ENCODE measurements at regions of chr2 and their contacts with region 1.

Region 1: GRCh38 chr2:102082571-102083392 is 59.8 kb upstream of the IL1R1 start:
- DNase-seq: peak; percentile 74
- ATAC-seq: peak; percentile 93
- H3K4me3 Mint-ChIP-seq: peak overlapping the region; percentile 56
- H3K27ac Mint-ChIP-seq: peak overlapping the region; percentile 92
- H3K4me1 Mint-ChIP-seq: peaks cover 53% of the 10 kb centered on the region
- H3K27me3 Mint-ChIP-seq: no peaks in the 10 kb centered on the region
- CTCF ChIP-seq: no peak

Region 2: DNA sequence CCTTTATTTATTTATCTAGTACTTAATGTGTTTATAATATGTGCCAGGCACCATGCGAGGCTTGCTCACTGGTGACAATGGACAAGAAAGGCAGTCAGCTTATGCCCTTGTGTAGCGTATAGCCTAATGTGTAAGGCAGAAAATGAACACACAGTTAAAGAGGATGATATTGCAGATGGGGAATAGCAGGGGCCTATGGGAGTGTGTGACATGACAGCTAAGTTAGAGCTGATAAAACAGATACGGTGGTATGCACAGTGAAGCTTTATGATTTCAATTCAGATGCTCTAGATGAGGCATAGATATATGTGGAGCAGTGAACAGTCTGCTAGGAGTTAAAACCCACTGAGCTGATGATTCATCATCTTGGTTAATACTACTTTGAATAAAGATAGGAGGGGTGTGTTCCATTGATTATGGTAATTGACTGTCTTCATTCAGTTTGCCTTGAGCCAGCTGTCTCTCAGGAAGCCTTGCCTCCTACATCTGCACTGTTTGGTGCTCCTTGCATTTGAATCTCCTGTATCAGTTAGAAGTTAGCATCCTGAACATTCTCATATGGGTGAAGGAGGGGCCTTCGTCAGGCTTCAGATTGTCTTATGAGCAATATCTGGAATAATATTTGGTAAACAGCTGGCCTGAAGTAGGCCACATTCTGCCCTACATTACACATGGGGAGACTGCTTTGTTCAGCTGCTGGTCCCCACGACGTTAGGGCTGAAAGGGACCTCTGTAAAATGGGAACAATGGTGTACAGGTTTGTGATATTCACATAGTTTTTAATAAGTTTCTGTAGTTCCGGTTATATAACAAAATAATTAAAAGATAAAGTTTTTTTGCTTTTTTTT is 372.1 kb before region 1 on chr2:
- CTCF ChIA-PET with region 1: no interaction called
- POLR2A ChIA-PET with region 1: no interaction called
- intact Hi-C with region 1: loop called (anchors 10 kb)
- DNase-seq: no peak
- ATAC-seq: peak; percentile 90
- H3K4me3 Mint-ChIP-seq: peak overlapping the region; percentile 3
- H3K27ac Mint-ChIP-seq: peak overlapping the region; percentile 65
- H3K4me1 Mint-ChIP-seq: peaks cover 62% of the 10 kb centered on the region
- H3K27me3 Mint-ChIP-seq: no peaks in the 10 kb centered on the region
- CTCF ChIP-seq: no peak

Region 3: DNA sequence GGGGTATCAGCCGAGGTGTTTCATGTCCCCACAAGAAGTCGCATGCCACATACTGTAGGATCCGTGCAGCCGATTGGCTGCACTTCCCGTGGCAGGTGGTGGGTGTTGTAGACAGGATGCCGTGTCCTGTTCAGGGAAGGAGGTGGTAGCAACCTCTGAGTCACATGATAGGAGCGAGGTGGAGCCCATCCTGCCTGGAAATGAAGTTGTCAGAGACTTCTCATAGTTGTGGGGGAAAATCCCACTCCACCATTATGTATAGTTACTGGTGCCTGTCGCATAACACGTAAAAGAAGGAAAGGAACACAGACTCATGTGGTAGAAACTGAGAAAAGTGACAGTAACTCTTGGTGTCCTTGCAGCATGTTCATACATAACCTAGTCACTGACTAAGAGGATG is 182.4 kb before region 1 on chr2:
- CTCF ChIA-PET with region 1: no interaction called
- POLR2A ChIA-PET with region 1: no interaction called
- intact Hi-C with region 1: no loop called
- DNase-seq: peak; percentile 42
- ATAC-seq: peak; percentile 92
- H3K4me3 Mint-ChIP-seq: no peak overlapping the region
- H3K27ac Mint-ChIP-seq: no peak overlapping the region
- H3K4me1 Mint-ChIP-seq: peaks cover 11% of the 10 kb centered on the region
- H3K27me3 Mint-ChIP-seq: peaks cover 10% of the 10 kb centered on the region
- CTCF ChIP-seq: no peak

Region 4: DNA sequence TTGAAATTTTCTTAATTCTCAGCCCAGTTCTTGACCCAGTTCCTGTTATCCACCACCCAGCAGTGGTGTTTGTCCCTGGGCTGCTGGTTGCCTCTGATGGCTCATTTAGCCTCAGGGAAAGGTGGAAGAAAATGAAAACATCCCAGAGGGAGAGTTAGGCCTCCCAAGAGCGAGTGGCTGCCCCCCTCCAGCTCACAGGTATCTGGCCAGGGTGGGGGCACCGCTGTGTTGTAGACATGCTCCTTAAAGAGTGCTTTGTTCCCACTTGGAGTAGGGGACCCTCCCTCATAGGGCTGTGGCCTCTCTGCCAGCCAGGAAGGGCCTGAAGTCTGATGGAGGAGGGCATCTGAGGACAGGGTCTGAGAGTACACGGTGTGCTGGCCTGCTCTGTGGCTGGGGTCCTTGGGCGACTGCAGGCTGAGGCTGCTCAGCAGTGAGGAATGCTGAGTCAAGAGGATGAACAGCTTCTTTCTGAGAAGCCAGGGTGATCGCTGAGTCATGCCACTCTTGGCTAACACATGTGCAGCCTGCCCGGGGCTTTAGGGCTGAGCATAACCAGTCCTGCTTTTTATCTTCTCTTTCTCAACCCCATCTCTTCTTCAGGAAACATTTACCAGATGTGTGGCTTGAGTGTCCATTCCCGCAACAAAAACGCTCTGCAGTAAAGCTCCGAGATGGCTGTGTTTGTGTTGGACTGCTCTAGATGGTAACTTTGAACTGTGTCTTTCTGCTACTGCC is 18.7 kb before region 1 on chr2:
- CTCF ChIA-PET with region 1: interaction called, 3 read pairs
- POLR2A ChIA-PET with region 1: interaction called, 25 read pairs
- intact Hi-C with region 1: loop called (anchors 2 kb)
- DNase-seq: peak; percentile 57
- ATAC-seq: peak; percentile 9
- H3K4me3 Mint-ChIP-seq: no peak overlapping the region
- H3K27ac Mint-ChIP-seq: peak overlapping the region; percentile 16
- H3K4me1 Mint-ChIP-seq: peaks cover 31% of the 10 kb centered on the region
- H3K27me3 Mint-ChIP-seq: peaks cover 1% of the 10 kb centered on the region
- CTCF ChIP-seq: no peak

Region 5: GRCh38 chr2:102103992-102104871 is 21.4 kb after region 1 on chr2:
- CTCF ChIA-PET with region 1: interaction called, 5 read pairs
- POLR2A ChIA-PET with region 1: interaction called, 13 read pairs
- intact Hi-C with region 1: no loop called
- DNase-seq: peak; percentile 88
- ATAC-seq: peak; percentile 84
- H3K4me3 Mint-ChIP-seq: peak overlapping the region; percentile 13
- H3K27ac Mint-ChIP-seq: no peak overlapping the region
- H3K4me1 Mint-ChIP-seq: peaks cover 21% of the 10 kb centered on the region
- H3K27me3 Mint-ChIP-seq: peaks cover 9% of the 10 kb centered on the region
- CTCF ChIP-seq: no peak

Region 6: GRCh38 chr2:102235491-102235890 is 152.7 kb after region 1 on chr2:
- CTCF ChIA-PET with region 1: interaction called, 14 read pairs
- POLR2A ChIA-PET with region 1: interaction called, 4 read pairs
- intact Hi-C with region 1: loop called (anchors 5 kb)
- DNase-seq: peak; percentile 46
- ATAC-seq: no peak
- H3K4me3 Mint-ChIP-seq: no peak overlapping the region
- H3K27ac Mint-ChIP-seq: no peak overlapping the region
- H3K4me1 Mint-ChIP-seq: peaks cover 49% of the 10 kb centered on the region
- H3K27me3 Mint-ChIP-seq: no peaks in the 10 kb centered on the region
- CTCF ChIP-seq: peak; percentile 20